A673 (cell line): ENCODE measurements at regions of chr5 and their contacts with region 1.

Region 1: GRCh38 chr5:75336625-75337339 is at the start of gene HMGCR:
- DNase-seq: peak; percentile 99
- H3K4me3 ChIP-seq: peak within 1 kb of the TSS; percentile 99
- H3K27ac ChIP-seq: peak within 1 kb of the TSS; percentile 88
- H3K4me1 ChIP-seq: peaks cover 26% of the 10 kb centered on the region
- H3K27me3 ChIP-seq: no peaks in the 10 kb centered on the region
- CTCF ChIP-seq: no peak; the same call in 1 of the 2 replicates
- total RNA-seq, gene HMGCR: 127 and 168 TPM in 2 replicates

Region 2: DNA sequence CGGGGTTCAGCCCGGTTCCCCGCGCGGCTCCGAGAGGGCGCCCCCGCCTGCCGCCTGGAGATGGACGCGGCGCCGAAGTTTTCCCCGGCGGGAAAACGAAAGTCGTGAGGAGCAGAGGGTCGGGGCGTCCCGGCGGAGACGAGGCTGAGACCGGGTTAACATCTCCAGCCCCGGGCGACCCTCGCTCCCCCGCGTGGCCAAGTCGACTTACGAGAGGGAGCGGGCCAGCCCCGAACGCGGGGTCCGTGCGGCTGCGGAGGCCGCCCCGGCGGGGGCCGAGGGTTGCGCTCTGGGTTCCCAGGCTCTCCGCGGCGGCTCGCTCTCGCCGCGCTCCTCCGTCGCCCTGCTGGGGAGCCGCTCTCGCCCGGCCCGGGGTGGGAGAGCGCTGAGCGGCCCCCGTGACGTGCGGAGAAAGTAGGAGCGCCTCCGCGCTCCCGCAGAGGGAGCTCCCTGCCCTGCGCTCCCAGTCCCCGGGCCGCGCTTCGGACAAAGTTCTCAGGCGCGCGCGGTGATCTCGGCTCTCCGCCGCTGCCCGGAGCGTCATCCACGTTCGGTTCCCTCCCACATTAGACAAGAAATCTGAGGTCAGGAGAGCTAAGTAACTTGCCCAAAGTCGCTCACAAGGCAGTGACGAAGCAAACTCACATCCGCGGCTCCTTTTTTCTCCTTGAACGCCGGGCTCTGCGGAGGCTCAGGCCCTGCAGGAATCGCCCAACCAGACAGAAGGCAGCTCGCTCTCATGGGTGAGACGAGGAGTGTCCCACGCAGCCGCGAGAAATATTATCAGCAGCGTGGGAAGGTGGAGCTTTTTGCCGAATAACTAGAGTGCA is 283.3 kb before region 1 on chr5:
- CTCF ChIA-PET with region 1: no interaction called
- POLR2A ChIA-PET with region 1: no interaction called
- intact Hi-C with region 1: loop called (anchors 5 kb)
- DNase-seq: peak; percentile 72
- H3K4me3 ChIP-seq: peak overlapping the region; percentile 72
- H3K27ac ChIP-seq: peak overlapping the region; percentile 73
- H3K4me1 ChIP-seq: peaks cover 14% of the 10 kb centered on the region
- H3K27me3 ChIP-seq: peaks cover 31% of the 10 kb centered on the region
- CTCF ChIP-seq: no peak

Region 3: DNA sequence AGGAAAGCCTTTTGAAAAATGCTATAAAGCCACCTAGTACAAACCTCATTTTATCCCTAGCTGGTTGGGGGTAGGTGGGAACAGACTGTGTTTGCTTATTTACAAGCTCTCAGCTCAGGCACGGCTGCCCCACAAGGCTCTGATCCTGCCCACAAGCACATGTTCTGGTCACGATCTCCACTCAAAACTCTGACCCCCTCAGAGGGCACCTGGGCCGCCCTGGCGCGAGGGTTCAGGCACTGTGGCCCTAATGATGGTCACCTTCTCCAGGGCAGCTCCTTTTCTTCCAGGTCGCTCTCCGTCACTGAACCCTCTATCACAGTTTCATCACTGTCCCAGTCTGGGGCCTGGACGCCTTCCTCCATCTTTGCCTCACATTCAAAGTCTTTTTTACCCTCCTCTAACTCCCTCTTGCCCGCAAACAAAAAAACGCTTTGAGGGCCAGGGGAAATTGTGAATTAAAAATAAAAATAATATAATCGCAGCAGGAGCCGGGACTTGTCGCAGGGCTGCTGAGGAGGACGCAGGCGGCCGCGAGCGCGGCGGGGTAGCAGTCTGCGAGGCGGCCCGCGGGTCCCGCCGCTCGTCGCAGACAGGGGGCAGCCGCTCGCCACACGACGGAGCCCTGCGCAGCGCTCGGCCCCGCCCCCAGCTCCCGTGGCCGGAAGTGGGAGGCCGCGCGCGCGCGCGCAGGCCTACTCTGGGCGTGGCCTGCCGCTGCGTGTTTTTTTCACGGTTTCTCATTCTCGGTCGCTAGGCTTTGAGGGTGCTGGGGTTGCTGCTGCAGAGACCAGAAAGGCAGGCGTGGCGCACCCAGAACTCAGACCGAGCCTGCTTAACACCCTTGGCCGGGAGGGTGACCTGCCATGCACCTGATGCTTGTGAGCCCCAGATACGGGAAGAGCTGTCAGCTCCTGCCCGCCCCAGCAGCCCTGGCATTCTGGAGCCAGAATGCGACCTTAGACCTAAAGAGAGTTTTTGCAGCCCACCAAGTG is 100.2 kb before region 1 on chr5 and contains the start of gene ANKRD31:
- CTCF ChIA-PET with region 1: interaction called, 11 read pairs
- POLR2A ChIA-PET with region 1: no interaction called
- intact Hi-C with region 1: no loop called
- DNase-seq: peak; percentile 87
- H3K4me3 ChIP-seq: peak within 1 kb of the TSS; percentile 58
- H3K27ac ChIP-seq: no peak within 1 kb of the TSS
- H3K4me1 ChIP-seq: no peaks in the 10 kb centered on the region
- H3K27me3 ChIP-seq: no peaks in the 10 kb centered on the region
- CTCF ChIP-seq: peak; percentile 67
- total RNA-seq, gene ANKRD31: 0.04 and 0.15 TPM in 2 replicates

Region 4: GRCh38 chr5:75281716-75282465 is 54.9 kb before region 1 on chr5:
- CTCF ChIA-PET with region 1: no interaction called
- POLR2A ChIA-PET with region 1: interaction called, 12 read pairs
- intact Hi-C with region 1: no loop called
- DNase-seq: no peak
- H3K4me3 ChIP-seq: no peak overlapping the region
- H3K27ac ChIP-seq: no peak overlapping the region
- H3K4me1 ChIP-seq: no peaks in the 10 kb centered on the region
- H3K27me3 ChIP-seq: no peaks in the 10 kb centered on the region
- CTCF ChIP-seq: no peak

Region 5: GRCh38 chr5:75460942-75461610 is 124.3 kb after region 1 on chr5:
- CTCF ChIA-PET with region 1: no interaction called
- POLR2A ChIA-PET with region 1: interaction called, 19 read pairs
- intact Hi-C with region 1: no loop called
- DNase-seq: no peak
- H3K4me3 ChIP-seq: no peak overlapping the region
- H3K27ac ChIP-seq: no peak overlapping the region
- H3K4me1 ChIP-seq: peaks cover 26% of the 10 kb centered on the region
- H3K27me3 ChIP-seq: no peaks in the 10 kb centered on the region
- CTCF ChIP-seq: no peak

Region 6: DNA sequence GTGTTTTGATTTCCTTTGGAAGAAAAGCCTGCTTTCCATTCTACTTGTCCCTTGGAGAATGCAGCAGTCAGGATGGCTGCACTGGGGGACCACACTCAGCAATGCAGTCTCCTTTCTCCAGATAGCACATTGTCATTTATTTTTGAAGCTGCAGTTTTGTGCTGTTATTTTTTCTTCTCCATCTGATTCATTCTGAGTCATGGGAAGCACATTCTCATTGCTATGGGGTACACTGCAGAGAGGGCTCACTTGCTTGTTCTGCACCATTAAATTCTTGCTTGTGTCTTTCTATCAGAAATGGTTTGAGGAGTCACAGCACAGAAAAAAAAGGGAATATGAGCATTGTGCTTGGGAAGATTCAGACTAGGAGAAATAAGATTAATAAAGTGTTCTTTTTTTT is 420.2 kb after region 1 on chr5:
- CTCF ChIA-PET with region 1: no interaction called
- POLR2A ChIA-PET with region 1: interaction called, 16 read pairs
- intact Hi-C with region 1: no loop called
- DNase-seq: no peak
- H3K4me3 ChIP-seq: no peak overlapping the region
- H3K27ac ChIP-seq: no peak overlapping the region
- H3K4me1 ChIP-seq: no peaks in the 10 kb centered on the region
- H3K27me3 ChIP-seq: peaks cover 45% of the 10 kb centered on the region
- CTCF ChIP-seq: no peak

Region 7: DNA sequence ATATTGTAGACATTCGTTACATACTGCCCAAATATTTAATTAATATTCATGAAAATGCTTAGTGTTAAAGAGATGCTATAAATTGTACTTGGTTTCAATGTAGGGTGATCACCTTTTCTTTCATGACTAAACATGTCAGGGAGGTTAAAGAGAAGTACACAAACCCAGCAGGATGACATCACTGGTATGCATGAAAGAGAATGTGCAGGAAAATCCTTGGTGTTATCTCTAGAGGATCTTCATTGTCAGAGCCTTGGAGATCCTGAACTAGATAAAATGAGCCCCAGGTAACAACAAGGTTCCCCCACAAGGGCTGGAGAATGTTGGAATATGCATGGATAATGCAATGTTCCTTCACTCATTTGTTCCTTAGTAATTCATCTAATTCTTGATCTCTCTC is 713.4 kb after region 1 on chr5:
- CTCF ChIA-PET with region 1: no interaction called
- POLR2A ChIA-PET with region 1: no interaction called
- intact Hi-C with region 1: no loop called
- DNase-seq: no peak
- H3K4me3 ChIP-seq: no peak overlapping the region
- H3K27ac ChIP-seq: no peak overlapping the region
- H3K4me1 ChIP-seq: no peaks in the 10 kb centered on the region
- H3K27me3 ChIP-seq: peaks cover 13% of the 10 kb centered on the region
- CTCF ChIP-seq: no peak